GM18951 (cell line): ENCODE measurements at regions of chr3 and their contacts with region 1.

Region 1: GRCh38 chr3:168165390-168166269 is 69.9 kb upstream of the GOLIM4 start:
- POLR2A ChIP-seq: no peak

Region 2: GRCh38 chr3:168040607-168041208 is 124.9 kb before region 1 on chr3:
- in situ Hi-C with region 1: loop called (anchors 5 kb)
- POLR2A ChIP-seq: no peak